ENCODE measurements at regions of chr16 and their contacts with region 1.

Region 1: GRCh38 chr16:69930117-69930776 is 20.9 kb upstream of the CLEC18A start:
- DNase-seq: no peak
- H3K4me3 ChIP-seq: no peak overlapping the region
- CTCF ChIP-seq: peak; percentile 71

Region 2: DNA sequence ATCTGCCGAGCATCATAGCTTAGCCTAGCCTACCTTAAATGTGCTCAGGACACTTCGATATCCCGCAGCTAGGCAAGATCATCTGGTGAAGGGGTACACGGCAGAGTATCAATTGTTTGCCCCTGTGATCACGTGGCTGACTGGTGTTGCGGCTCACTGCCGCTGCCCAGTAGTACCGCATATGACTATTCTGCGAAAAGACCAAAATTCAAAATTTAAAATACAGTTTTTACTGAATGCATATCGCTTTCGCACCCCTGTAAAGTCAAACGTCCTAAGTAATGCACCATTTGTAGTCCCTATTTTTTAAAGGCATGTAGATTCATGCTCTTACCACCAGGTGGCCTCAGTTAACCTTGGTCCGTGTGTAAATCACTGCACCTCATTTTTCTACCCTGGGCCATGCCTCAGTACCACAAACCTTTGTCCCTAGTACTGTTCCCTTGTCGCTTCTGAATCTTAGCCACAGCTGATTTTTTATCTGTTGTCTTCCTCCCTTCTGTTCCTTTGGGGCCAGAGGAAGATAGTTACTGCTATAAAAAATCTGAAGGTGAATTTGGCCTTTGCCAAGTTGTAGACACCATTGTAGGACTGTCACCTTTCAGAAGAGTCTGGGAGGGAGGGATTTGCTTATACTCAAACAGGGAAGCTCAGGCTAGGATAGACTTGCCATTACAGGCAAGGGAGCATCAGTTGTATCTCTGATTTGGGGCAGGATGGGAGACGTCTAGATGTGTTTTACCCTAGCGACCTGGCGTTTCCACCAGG is 133.7 kb before region 1 on chr16:
- CTCF ChIA-PET with region 1: interaction called, 598 read pairs
- POLR2A ChIA-PET with region 1: no interaction called
- DNase-seq: no peak
- H3K4me3 ChIP-seq: no peak overlapping the region
- CTCF ChIP-seq: peak; percentile 69

Region 3: DNA sequence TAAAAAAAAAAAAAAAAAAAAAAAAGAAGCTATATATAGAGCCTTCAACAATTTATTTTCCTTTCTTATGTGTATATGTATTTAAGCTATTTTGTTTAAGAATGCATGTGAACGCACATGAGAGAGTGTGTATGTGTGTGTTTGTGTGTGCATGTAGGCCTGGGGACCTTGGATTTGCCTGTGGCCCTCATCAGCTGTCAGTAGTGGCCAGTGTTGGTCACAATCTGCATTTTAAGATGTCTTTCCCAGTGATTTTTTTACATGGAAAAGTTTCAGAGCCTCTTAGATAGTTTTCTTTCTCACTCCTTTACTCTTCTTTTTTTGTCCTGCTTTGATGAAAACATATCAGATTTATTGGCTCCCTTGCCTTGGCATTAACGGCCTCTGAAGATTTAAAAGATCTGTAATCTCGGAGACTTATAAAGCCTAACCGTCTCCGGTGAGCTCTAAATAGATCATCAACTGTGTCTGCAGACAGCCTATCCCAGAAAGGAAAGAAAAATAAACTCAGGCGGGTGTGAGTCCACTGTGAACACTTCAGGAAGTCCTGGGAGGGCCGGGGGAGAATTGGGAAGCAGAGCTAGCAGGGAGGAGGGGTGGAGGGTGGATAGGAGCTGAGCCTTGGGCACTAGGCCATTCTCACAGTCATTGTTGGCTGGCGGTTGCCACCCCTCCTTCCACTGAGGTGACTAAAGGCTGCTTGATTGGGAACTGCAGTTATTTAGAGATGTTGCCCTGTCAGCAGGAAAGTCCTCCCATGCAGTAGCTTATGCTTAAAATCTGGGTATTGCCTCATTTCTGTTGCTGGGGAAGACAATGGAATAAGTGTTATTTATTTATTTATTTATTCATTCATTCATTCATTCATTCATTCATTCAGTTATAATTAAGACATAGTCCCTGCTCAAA is 81.4 kb before region 1 on chr16:
- CTCF ChIA-PET with region 1: interaction called, 19 read pairs
- POLR2A ChIA-PET with region 1: no interaction called
- DNase-seq: peak; percentile 76
- H3K4me3 ChIP-seq: peak overlapping the region; percentile 27; the same call in 1 of the 2 replicates
- CTCF ChIP-seq: peak; percentile 17

Region 4: DNA sequence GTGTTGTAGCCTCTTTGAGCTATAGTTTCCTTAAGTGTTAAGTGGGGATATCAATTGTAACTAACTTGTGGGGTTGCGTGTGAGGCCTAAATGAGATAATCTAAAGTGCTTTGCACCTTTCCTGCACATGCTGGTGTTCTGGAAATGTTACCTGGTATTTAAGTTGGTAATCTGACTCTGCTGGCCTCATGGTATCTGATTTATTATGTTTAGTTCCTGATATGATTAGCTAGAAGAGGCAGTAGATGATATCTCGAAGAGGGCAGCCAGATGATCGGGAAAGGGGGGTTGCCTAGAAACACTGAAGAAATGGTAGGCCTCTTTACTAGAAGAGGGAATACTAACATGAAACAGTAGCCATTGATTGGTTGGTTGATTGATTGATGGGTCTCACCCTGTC is 44.5 kb before region 1 on chr16:
- CTCF ChIA-PET with region 1: interaction called, 11 read pairs
- POLR2A ChIA-PET with region 1: no interaction called
- DNase-seq: no peak
- H3K4me3 ChIP-seq: no peak overlapping the region
- CTCF ChIP-seq: no peak

Region 5: DNA sequence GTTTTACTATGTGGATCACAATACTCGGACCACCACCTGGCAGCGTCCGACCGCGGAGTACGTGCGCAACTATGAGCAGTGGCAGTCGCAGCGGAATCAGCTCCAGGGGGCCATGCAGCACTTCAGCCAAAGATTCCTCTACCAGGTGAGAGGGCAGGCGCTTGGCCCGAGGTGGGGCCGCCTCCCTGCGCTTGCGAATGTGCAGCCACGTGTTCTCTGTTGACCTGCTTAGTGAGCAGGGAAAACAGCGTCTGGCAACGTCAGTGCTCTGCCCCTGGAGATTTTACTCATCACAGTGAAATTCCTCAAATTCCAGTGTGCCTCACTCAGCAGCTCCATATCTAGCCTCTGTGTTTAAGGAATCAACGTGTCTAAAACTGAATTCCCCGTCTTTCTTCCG is 12.5 kb before region 1 on chr16:
- CTCF ChIA-PET with region 1: interaction called, 56 read pairs
- POLR2A ChIA-PET with region 1: no interaction called
- DNase-seq: peak; percentile 91
- H3K4me3 ChIP-seq: peak overlapping the region; percentile 44
- CTCF ChIP-seq: no peak

Region 6: GRCh38 chr16:70018254-70018653 is 88.0 kb after region 1 on chr16:
- CTCF ChIA-PET with region 1: no interaction called
- POLR2A ChIA-PET with region 1: no interaction called
- DNase-seq: no peak
- H3K4me3 ChIP-seq: no peak overlapping the region
- CTCF ChIP-seq: no peak

Region 7: DNA sequence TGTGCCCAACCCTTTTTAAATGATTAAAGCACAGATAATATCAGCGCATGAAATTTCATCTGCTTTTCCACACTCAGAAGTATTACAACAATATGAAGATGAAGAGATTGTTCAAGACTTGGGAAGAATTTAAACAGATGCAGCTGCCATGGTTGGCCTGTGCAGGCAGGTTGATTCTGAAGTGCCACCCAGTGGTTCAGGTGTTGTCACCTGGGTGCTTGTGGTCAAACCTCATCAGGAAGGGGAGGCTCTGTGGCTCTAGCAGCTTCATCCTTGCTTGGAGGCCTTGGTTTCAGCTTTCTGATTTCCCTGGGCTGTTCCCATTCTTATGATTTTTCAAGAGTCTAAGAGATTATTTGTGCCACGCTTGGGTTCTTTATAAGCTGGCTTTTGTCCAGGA is 221.1 kb after region 1 on chr16:
- CTCF ChIA-PET with region 1: no interaction called
- POLR2A ChIA-PET with region 1: no interaction called
- DNase-seq: no peak
- H3K4me3 ChIP-seq: no peak overlapping the region
- CTCF ChIP-seq: no peak

Measured in AG04449 (cell line).